Left cardiac atrium (tissue), 4 donors: ENCODE measurements at regions of chr6 and their contacts with region 1.

Region 1: GRCh38 chr6:108598305-108598863 is 37.7 kb downstream of the FOXO3 start:
- DNase-seq: no peak
- ATAC-seq: peak in 1 of 2 donors; percentile 58

Region 2: DNA sequence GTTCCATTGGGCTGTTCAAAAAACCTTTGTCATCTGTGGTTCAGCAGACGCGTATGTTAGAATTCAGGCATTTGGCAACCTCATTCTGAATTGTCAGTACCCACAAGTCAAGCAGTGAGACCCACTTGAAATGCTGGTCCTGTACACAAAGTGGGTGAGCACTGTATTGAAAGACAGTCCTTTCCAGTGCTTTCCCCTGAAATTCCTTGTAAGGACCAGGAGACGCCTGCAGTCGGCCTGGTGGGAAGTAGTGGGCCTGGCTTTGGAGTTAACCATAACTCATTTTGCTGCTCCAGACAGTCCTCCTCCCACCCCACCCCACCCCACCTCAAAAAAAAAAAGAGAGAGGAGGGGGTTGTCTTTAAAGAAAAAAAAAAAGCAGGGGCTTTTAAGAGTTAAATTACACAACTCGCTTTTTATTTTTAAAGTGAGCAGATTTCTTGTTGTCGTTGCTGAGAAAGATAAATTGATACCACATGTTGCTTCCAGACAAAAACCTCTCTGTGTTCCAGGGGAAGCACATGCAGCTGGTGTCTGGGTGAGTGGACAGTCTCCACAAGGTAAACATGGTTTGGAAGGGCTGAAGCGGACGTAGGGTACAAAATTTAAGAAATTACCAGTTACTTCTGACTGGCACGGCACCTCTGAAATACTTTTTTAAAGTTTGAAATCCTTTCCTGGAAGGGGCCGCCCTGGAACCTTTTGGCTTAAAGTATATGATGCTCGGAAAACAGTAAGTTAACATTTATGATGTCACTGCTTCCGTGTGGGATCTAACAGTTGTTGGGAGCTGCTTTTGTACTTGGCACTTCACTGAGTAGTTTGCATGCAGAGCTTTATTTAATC is 57.6 kb after region 1 on chr6:
- intact Hi-C with region 1: loop called in 1 of 2 experiments (anchors 5 kb)
- DNase-seq: peak; percentile 53
- ATAC-seq: peak; percentile 42 to 52